Breast epithelium (tissue), 4 donors: ENCODE measurements at regions of chr1 and their contacts with region 1.

Region 1: GRCh38 chr1:156461781-156462647 is 38.6 kb downstream of the MEF2D start:
- DNase-seq: peak; percentile 72 to 83
- H3K4me3 ChIP-seq: no peak overlapping the region
- H3K27ac ChIP-seq: peak overlapping the region; percentile 79 to 81
- H3K4me1 ChIP-seq: peaks cover 17 to 19% of the 10 kb centered on the region in 2 donors
- H3K27me3 ChIP-seq: no peaks in the 10 kb centered on the region
- CTCF ChIP-seq: no peak
- POLR2A ChIP-seq: no peak

Region 2: GRCh38 chr1:156499842-156500546 is 38.0 kb after region 1 on chr1:
- intact Hi-C with region 1: loop called (anchors 5 kb)
- DNase-seq: no peak
- H3K4me3 ChIP-seq: peak overlapping the region; percentile 90 to 98 (median 94)
- H3K27ac ChIP-seq: peak overlapping the region; percentile 98 to 100
- H3K4me1 ChIP-seq: peaks cover 13 to 49% of the 10 kb centered on the region in 2 donors
- H3K27me3 ChIP-seq: no peaks in the 10 kb centered on the region
- CTCF ChIP-seq: peak in 1 of 3 donors; percentile 18
- POLR2A ChIP-seq: no peak